ENCODE measurements at regions of chr6 and their contacts with region 1.

Region 1: DNA sequence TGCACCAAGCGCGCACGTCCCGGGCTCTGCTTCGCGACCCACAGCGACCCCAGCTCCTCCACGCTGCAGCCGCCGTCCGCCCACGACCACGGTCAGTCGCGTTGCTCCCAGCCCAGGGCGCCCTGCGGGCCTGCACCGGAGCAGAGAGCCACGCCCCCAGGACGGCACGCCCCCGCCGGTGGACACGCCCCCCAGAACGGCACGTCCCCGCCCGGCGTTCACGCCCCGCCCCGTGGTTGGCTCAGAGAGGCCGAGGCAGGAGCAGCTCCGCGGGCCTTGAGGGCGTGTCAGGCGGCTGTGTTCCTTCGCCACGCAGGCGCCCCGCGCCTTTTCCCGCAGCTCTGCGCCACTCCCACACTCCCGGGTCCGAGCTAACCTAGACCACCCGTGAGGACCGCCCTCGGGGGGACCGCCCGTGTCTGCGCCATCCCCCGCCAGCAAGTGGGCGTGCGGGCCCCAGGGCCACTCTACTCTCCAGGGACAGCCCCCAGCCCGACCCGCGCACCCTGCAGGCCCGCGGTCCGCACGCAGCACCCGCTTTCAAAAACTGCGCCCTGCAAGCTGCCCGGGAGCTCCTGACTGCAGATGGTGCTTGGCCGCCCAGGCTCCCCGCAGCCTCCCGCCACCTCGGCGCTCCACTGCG is at the start of gene RNASET2:
- DNase-seq: peak; percentile 97 to 99
- ATAC-seq: peak; percentile 99 to 100 (median 99)
- H3K4me3 ChIP-seq: peak within 1 kb of the TSS; percentile 86
- H3K27ac ChIP-seq: peak within 1 kb of the TSS; percentile 34
- H3K4me1 ChIP-seq: peaks cover 4% of the 10 kb centered on the region
- H3K27me3 ChIP-seq: no peaks in the 10 kb centered on the region
- CTCF ChIP-seq: no peak
- total RNA-seq, gene RNASET2: 2.8 to 10.1 (median 6.5) TPM

Region 2: GRCh38 chr6:166999145-166999883 is 42.7 kb after region 1 on chr6 and contains the start of gene CEP43:
- intact Hi-C with region 1: loop called (anchors 5 kb)
- DNase-seq: peak; percentile 96 to 97
- ATAC-seq: peak; percentile 99
- H3K4me3 ChIP-seq: peak within 1 kb of the TSS; percentile 86
- H3K27ac ChIP-seq: peak within 1 kb of the TSS; percentile 62
- H3K4me1 ChIP-seq: peaks cover 17% of the 10 kb centered on the region
- H3K27me3 ChIP-seq: no peaks in the 10 kb centered on the region
- CTCF ChIP-seq: no peak
- total RNA-seq, gene CEP43: 3.0 to 7.9 (median 5.8) TPM